B cell (primary cell): ENCODE measurements at regions of chr1 and their contacts with region 1.

Region 1: DNA sequence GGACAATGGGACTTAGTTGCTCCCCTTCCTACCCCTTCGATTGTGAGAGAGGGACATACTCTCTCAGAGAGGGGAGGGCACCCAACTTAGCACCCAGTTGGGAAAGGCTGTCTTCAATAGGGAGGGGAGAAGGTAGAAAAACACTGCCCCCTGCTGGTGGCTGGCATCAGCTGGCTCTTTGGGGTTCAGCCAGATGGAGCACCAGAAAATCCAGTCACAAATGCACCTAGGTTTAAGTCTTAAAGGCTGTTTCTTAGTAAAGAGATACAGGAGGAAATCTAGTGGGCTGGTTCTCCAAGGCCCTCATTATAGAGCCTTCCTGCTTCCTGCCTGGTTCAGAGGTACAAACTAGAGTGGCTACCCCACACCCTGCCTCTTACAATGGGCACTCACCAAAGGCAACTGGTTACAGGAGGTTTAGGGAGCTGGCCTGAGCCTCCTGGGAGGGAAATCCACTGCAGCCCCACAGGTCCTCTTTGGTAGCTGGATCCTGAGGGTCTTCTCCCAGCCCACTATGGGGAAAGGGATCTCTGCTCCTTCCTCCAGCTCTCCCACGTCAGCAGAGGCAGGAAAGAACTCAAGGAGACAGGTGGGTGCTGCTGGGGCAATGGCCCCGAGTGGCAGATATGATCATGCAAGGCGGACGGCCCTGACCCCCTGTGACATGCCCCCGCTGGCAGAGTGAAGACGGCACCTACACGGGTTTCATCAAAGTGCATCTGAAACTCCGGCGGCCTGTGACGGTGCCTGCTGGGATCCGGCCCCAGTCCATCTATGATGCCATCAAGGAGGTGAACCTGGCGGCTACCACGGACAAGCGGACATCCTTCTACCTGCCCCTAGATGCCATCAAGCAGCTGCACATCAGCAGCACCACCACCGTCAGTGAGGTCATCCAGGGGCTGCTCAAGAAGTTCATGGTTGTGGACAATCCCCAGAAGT is 28.3 kb downstream of the EIF2D start:
- DNase-seq: peak; percentile 86
- ATAC-seq: no peak
- H3K4me3 ChIP-seq: no peak overlapping the region
- H3K4me3 Mint-ChIP-seq: peak overlapping the region; percentile 70
- H3K27ac ChIP-seq: peak overlapping the region in 1 of 2 donors; percentile 96
- H3K27ac Mint-ChIP-seq: peak overlapping the region; percentile 98
- H3K4me1 ChIP-seq: peaks cover 46 to 50% of the 10 kb centered on the region in 2 donors
- H3K4me1 Mint-ChIP-seq: peaks cover 49% of the 10 kb centered on the region
- H3K27me3 ChIP-seq: no peaks in the 10 kb centered on the region
- H3K27me3 Mint-ChIP-seq: no peaks in the 10 kb centered on the region
- CTCF ChIP-seq: peak; percentile 94

Region 2: DNA sequence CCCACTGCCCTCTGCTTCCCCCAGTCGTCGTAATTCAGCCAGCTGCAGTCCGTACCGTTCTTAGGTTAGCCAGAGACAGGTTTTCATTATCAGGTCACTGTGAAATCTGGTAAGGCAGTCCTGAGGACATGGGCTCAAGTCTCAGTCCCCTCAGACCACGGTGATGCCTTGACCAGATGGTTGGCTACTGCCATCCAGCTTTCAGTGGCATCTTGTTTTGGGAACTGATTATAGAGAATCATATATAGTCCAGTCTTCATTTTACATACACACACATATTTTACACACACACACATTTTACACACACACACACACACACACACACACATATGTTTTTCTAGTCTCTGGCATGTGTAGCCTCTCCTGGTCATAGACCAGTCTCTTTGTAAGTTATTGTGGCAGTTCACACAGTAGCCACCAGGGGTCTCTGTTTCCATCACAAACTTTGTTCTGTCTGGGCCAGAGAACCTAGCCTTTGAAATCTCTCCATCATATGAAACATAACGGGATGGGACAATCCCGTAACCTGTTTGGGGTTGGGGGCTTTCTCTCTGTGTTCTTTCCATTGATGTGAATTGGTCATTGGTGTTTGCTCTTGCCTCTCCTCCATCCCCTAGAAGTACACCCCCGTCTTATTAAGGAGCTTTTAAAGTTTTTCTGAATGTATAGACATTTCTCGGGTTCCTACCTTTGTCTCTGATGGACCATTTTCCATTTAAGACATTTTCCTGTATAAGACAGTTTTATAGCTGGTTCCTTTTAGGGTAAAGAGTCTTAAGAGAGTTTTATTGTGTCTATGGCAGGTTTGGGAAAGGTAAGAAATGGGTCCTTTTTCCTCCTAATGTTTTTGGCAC is 122.1 kb before region 1 on chr1:
- CTCF ChIA-PET with region 1: interaction called, 20 read pairs
- POLR2A ChIA-PET with region 1: no interaction called
- intact Hi-C with region 1: no loop called
- DNase-seq: peak; percentile 78
- ATAC-seq: peak; percentile 94
- H3K4me3 ChIP-seq: no peak overlapping the region
- H3K4me3 Mint-ChIP-seq: no peak overlapping the region
- H3K27ac ChIP-seq: no peak overlapping the region
- H3K27ac Mint-ChIP-seq: no peak overlapping the region
- H3K4me1 ChIP-seq: peaks cover 12% of the 10 kb centered on the region in 2 donors
- H3K4me1 Mint-ChIP-seq: peaks cover 10% of the 10 kb centered on the region
- H3K27me3 ChIP-seq: no peaks in the 10 kb centered on the region
- H3K27me3 Mint-ChIP-seq: no peaks in the 10 kb centered on the region
- CTCF ChIP-seq: peak; percentile 84

Region 3: GRCh38 chr1:206479183-206480125 is 104.5 kb before region 1 on chr1:
- CTCF ChIA-PET with region 1: interaction called, 69 read pairs
- POLR2A ChIA-PET with region 1: no interaction called
- intact Hi-C with region 1: loop called (anchors 1 kb)
- DNase-seq: peak; percentile 80
- ATAC-seq: peak; percentile 79
- H3K4me3 ChIP-seq: no peak overlapping the region
- H3K4me3 Mint-ChIP-seq: no peak overlapping the region
- H3K27ac ChIP-seq: no peak overlapping the region
- H3K27ac Mint-ChIP-seq: peak overlapping the region; percentile 42
- H3K4me1 ChIP-seq: no peaks in the 10 kb centered on the region
- H3K4me1 Mint-ChIP-seq: peaks cover 4% of the 10 kb centered on the region
- H3K27me3 ChIP-seq: no peaks in the 10 kb centered on the region
- H3K27me3 Mint-ChIP-seq: no peaks in the 10 kb centered on the region
- CTCF ChIP-seq: peak; percentile 78

Region 4: DNA sequence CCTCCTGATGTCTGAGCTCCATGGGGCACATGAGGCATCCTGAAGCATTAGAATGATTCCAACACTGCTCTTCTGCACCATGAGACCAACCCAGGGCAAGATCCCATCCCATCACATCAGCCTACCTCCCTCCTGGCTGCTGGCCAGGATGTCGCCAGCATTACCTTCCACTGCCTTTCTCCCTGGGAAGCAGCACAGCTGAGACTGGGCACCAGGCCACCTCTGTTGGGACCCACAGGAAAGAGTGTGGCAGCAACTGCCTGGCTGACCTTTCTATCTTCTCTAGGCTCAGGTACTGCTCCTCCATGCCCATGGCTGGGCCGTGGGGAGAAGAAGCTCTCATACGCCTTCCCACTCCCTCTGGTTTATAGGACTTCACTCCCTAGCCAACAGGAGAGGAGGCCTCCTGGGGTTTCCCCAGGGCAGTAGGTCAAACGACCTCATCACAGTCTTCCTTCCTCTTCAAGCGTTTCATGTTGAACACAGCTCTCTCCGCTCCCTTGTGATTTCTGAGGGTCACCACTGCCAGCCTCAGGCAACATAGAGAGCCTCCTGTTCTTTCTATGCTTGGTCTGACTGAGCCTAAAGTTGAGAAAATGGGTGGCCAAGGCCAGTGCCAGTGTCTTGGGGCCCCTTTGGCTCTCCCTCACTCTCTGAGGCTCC is 87.7 kb before region 1 on chr1:
- CTCF ChIA-PET with region 1: interaction called, 81 read pairs
- POLR2A ChIA-PET with region 1: no interaction called
- intact Hi-C with region 1: no loop called
- DNase-seq: peak; percentile 46
- ATAC-seq: peak; percentile 44
- H3K4me3 ChIP-seq: peak overlapping the region in 1 of 5 experiments; percentile 3
- H3K4me3 Mint-ChIP-seq: peak overlapping the region; percentile 68
- H3K27ac ChIP-seq: peak overlapping the region; percentile 28 to 67
- H3K27ac Mint-ChIP-seq: peak overlapping the region; percentile 83
- H3K4me1 ChIP-seq: peaks cover 32 to 37% of the 10 kb centered on the region in 2 donors
- H3K4me1 Mint-ChIP-seq: peaks cover 43% of the 10 kb centered on the region
- H3K27me3 ChIP-seq: no peaks in the 10 kb centered on the region
- H3K27me3 Mint-ChIP-seq: no peaks in the 10 kb centered on the region
- CTCF ChIP-seq: no peak

Region 5: GRCh38 chr1:206556750-206557635 is 27.0 kb before region 1 on chr1:
- CTCF ChIA-PET with region 1: interaction called, 1,018 read pairs
- POLR2A ChIA-PET with region 1: interaction called, 27 read pairs
- intact Hi-C with region 1: loop called (anchors 1 kb)
- DNase-seq: peak; percentile 89
- ATAC-seq: peak; percentile 79
- H3K4me3 ChIP-seq: peak overlapping the region; percentile 85 to 100 (median 97)
- H3K4me3 Mint-ChIP-seq: peak overlapping the region; percentile 99
- H3K27ac ChIP-seq: peak overlapping the region; percentile 86 to 95
- H3K27ac Mint-ChIP-seq: peak overlapping the region; percentile 99
- H3K4me1 ChIP-seq: peaks cover 46 to 69% of the 10 kb centered on the region in 2 donors
- H3K4me1 Mint-ChIP-seq: peaks cover 67% of the 10 kb centered on the region
- H3K27me3 ChIP-seq: no peaks in the 10 kb centered on the region
- H3K27me3 Mint-ChIP-seq: no peaks in the 10 kb centered on the region
- CTCF ChIP-seq: no peak

Region 6: GRCh38 chr1:206612129-206612876 is 28.3 kb after region 1 on chr1 and contains the start of gene EIF2D:
- CTCF ChIA-PET with region 1: interaction called, 5 read pairs
- POLR2A ChIA-PET with region 1: interaction called, 3 read pairs
- intact Hi-C with region 1: loop called (anchors 2 kb)
- DNase-seq: peak; percentile 96
- ATAC-seq: peak; percentile 100
- H3K4me3 ChIP-seq: peak within 1 kb of the TSS; percentile 61 to 87 (median 86)
- H3K4me3 Mint-ChIP-seq: peak within 1 kb of the TSS; percentile 93
- H3K27ac ChIP-seq: peak within 1 kb of the TSS; percentile 70 to 93
- H3K27ac Mint-ChIP-seq: peak within 1 kb of the TSS; percentile 96
- H3K4me1 ChIP-seq: peaks cover 8 to 12% of the 10 kb centered on the region in 2 donors
- H3K4me1 Mint-ChIP-seq: peaks cover 19% of the 10 kb centered on the region
- H3K27me3 ChIP-seq: no peaks in the 10 kb centered on the region
- H3K27me3 Mint-ChIP-seq: no peaks in the 10 kb centered on the region
- CTCF ChIP-seq: peak; percentile 88
- total RNA-seq, gene EIF2D: 60.6 and 62.2 TPM in 2 replicates